ENCODE measurements at regions of chr6 and their contacts with region 1.

Region 1: GRCh38 chr6:168370310-168370991 is 50.9 kb upstream of the DACT2 start:
- DNase-seq: peak; percentile 81 to 93 (median 90)
- H3K4me3 ChIP-seq: no peak overlapping the region
- H3K27ac ChIP-seq: no peak overlapping the region
- H3K4me1 ChIP-seq: peaks cover 3% of the 10 kb centered on the region
- H3K27me3 ChIP-seq: no peaks in the 10 kb centered on the region
- CTCF ChIP-seq: peak; percentile 90 to 95 (median 92)
- EP300 ChIP-seq: no peak
- POLR2A ChIP-seq: no peak

Region 2: GRCh38 chr6:167722634-167723309 is 647.7 kb before region 1 on chr6:
- intact Hi-C with region 1: no loop called
- DNase-seq: no peak
- H3K4me3 ChIP-seq: no peak overlapping the region
- H3K27ac ChIP-seq: no peak overlapping the region
- H3K4me1 ChIP-seq: no peaks in the 10 kb centered on the region
- H3K27me3 ChIP-seq: no peaks in the 10 kb centered on the region
- CTCF ChIP-seq: no peak
- EP300 ChIP-seq: no peak
- POLR2A ChIP-seq: no peak

Region 3: DNA sequence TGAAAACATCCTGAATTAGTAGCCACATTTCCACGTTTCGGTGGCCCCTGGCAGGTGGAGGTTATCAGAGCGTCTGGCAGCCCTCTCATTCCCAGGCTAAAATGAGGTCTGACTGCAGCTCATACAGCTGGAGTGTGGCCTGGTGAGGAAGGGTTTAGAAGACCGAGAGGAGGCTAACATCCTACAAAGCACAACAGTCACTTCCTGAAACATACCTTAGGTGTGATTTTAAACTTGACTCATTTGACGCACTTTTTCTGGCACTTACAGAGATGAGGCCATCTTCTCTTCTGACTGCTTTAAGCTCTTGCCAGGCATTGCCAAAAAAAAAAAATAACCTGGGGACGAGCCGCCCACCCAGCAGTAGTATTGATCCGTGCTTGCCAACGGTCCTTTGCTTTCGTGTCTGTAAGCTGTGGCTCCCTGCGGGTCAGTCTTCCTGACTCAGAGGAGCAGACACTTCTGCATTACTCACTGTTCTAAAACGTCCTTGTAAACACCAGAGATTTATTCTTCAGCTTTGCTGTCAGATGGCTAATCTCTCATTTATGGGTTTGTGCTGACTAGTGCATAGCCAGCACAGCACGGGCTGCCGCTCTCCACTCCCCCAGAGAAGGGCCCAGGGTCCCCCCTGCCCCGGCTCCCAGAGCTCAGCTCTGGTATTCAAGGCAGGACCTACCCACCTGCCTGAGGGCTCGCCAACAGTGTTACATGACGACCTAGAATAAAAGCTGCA is 213.0 kb before region 1 on chr6:
- intact Hi-C with region 1: loop called in 1 of 4 experiments (anchors 10 kb)
- DNase-seq: no peak
- H3K4me3 ChIP-seq: no peak overlapping the region
- H3K27ac ChIP-seq: no peak overlapping the region
- H3K4me1 ChIP-seq: peaks cover 2% of the 10 kb centered on the region
- H3K27me3 ChIP-seq: no peaks in the 10 kb centered on the region
- CTCF ChIP-seq: no peak
- EP300 ChIP-seq: no peak
- POLR2A ChIP-seq: no peak

Region 4: GRCh38 chr6:168440520-168441433 is 70.3 kb after region 1 on chr6 and contains the start of gene SMOC2:
- intact Hi-C with region 1: loop called in 2 of 4 experiments (anchors 5 to 10 kb)
- DNase-seq: peak; percentile 70 to 83 (median 76)
- H3K4me3 ChIP-seq: peak within 1 kb of the TSS; percentile 69
- H3K27ac ChIP-seq: peak within 1 kb of the TSS; percentile 70 to 81
- H3K4me1 ChIP-seq: peaks cover 15% of the 10 kb centered on the region
- H3K27me3 ChIP-seq: no peaks in the 10 kb centered on the region
- CTCF ChIP-seq: no peak
- EP300 ChIP-seq: no peak
- POLR2A ChIP-seq: no peak
- total RNA-seq, gene SMOC2: 84.4 to 152 (median 123) TPM

Region 5: GRCh38 chr6:168542301-168542700 is 171.8 kb after region 1 on chr6:
- intact Hi-C with region 1: loop called in 1 of 4 experiments (anchors 10 kb)
- DNase-seq: no peak
- H3K4me3 ChIP-seq: no peak overlapping the region
- H3K27ac ChIP-seq: no peak overlapping the region
- H3K4me1 ChIP-seq: peaks cover 21% of the 10 kb centered on the region
- H3K27me3 ChIP-seq: no peaks in the 10 kb centered on the region
- CTCF ChIP-seq: no peak
- EP300 ChIP-seq: no peak
- POLR2A ChIP-seq: no peak

Region 6: DNA sequence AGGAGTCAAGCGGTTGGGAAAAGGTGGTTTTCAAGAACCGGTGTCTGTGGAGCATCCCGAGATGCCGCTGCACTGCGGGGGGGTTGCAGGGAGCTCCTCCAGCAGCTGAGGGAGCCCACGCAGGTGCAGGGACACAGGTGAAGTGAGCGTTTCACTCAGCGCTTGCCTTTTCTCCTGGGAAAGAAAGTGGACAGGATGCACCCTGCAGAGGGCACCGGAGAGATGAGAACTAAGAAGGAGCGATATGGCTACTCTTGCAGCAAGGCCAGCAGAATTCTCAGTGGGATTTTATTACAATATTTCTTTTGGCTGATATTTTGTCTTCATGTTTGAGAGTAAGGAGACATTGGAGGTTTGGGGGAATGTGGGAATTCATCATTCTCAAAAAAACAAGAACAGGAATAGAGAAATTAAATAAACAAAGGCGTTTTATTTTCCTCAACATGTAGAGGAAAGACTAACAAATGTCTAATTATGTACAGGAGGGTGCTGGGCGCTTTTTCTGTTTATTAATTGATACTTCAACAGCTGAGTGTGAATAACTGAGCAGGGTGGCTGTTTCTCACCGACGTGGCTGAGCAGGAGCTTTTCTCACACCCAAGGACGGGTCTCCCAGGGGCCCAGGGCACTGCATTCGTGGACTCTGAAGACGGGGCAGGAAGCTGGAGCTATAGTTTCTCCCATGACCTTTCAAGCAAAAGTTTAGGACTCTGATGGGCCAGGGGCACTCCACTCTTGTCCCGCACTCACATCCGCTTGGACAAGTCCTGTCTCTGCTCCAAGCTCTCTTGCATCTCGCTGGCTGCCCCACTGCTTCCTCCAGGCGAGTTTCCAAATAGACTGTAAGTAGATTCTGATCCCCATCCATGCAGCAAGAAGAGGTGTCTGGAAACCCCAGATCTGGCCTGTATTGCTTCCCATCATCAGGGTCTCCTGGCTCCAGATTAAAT is 246.6 kb after region 1 on chr6:
- intact Hi-C with region 1: loop called in 1 of 4 experiments (anchors 10 kb)
- DNase-seq: peak in 4 of 5 donors; percentile 39 to 60 (median 56)
- H3K4me3 ChIP-seq: no peak overlapping the region
- H3K27ac ChIP-seq: no peak overlapping the region
- H3K4me1 ChIP-seq: peaks cover 5% of the 10 kb centered on the region
- H3K27me3 ChIP-seq: no peaks in the 10 kb centered on the region
- CTCF ChIP-seq: peak; percentile 16 to 25 (median 23)
- EP300 ChIP-seq: no peak
- POLR2A ChIP-seq: no peak

Region 7: DNA sequence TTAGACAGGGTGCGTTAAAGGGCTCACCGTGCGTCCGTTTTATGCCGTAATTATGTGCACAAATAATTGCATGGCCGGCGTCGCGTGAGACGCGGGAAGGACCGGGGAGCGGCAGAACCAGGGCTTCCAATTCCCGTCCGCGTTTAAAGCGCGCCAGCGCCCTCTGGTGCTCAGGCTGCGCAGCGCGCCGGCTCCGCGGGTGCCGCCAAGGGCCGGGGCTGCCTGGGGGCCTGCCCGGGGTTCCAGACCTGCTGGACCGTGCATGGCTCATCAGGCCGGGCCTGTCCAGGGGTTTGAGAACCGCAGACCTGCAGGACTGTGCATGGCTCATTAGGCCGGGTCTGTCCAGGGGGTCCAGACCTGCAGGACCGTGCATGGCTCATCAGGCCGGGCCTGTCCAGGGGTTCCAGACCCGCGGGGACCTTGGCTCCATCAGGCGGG is 514.2 kb after region 1 on chr6:
- intact Hi-C with region 1: loop called (anchors 2 kb)
- DNase-seq: peak; percentile 73 to 88 (median 81)
- H3K4me3 ChIP-seq: peak overlapping the region; percentile 21
- H3K27ac ChIP-seq: no peak overlapping the region
- H3K4me1 ChIP-seq: peaks cover 2% of the 10 kb centered on the region
- H3K27me3 ChIP-seq: no peaks in the 10 kb centered on the region
- CTCF ChIP-seq: peak; percentile 91 to 96 (median 95)
- EP300 ChIP-seq: no peak
- POLR2A ChIP-seq: peak; percentile 12